Activated B cell treated with CpG ODN at 0.5 μM for 24 hours (primary cell): ENCODE measurements at regions of chr1 and their contacts with region 1.

Region 1: GRCh38 chr1:58903514-58904298 is 119.9 kb upstream of the JUN start:
- DNase-seq: peak; percentile 75
- ATAC-seq: peak; percentile 90
- H3K4me3 Mint-ChIP-seq: peak overlapping the region; percentile 84
- H3K27ac Mint-ChIP-seq: peak overlapping the region; percentile 81
- H3K4me1 Mint-ChIP-seq: peaks cover 16% of the 10 kb centered on the region
- H3K27me3 Mint-ChIP-seq: no peaks in the 10 kb centered on the region
- CTCF ChIP-seq: no peak

Region 2: DNA sequence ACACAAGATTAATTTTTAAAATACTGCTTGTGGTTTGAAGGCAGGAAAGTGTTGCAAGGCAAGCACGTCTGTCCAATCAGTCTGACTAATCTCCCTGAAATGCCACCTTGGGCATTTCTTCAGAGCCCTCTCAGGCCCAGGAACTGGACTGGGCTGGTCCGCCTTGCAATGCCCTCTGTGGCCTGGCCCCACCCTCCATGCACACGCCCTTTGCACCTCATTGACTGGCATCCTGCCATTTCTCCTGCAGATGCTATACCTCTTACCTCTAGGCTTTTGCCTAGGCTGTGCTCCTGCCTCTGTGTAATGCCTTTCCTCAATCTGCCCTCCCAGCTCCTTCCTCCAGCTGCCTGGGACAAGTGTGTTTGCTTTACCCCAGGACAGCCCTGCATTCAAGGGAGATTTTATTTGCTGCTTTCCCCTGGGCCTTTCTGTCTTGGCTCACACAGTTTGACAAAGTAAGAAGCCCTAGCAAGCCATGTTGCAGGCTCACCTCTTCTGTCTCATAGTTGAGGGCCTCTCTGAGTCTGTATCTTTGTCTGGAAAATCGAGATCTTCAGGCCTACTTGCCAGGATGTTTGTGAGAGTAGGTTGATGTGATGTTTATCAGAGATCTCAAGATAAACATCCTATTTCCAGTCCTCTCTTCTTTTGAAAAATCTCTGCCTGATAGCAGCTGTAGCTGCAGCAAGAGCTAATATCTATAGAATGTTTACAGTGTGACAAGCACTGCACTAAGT is 29.3 kb after region 1 on chr1:
- CTCF ChIA-PET with region 1: no interaction called
- POLR2A ChIA-PET with region 1: no interaction called
- intact Hi-C with region 1: no loop called
- DNase-seq: no peak
- ATAC-seq: no peak
- H3K4me3 Mint-ChIP-seq: no peak overlapping the region
- H3K27ac Mint-ChIP-seq: no peak overlapping the region
- H3K4me1 Mint-ChIP-seq: peaks cover 8% of the 10 kb centered on the region
- H3K27me3 Mint-ChIP-seq: no peaks in the 10 kb centered on the region
- CTCF ChIP-seq: no peak

Region 3: DNA sequence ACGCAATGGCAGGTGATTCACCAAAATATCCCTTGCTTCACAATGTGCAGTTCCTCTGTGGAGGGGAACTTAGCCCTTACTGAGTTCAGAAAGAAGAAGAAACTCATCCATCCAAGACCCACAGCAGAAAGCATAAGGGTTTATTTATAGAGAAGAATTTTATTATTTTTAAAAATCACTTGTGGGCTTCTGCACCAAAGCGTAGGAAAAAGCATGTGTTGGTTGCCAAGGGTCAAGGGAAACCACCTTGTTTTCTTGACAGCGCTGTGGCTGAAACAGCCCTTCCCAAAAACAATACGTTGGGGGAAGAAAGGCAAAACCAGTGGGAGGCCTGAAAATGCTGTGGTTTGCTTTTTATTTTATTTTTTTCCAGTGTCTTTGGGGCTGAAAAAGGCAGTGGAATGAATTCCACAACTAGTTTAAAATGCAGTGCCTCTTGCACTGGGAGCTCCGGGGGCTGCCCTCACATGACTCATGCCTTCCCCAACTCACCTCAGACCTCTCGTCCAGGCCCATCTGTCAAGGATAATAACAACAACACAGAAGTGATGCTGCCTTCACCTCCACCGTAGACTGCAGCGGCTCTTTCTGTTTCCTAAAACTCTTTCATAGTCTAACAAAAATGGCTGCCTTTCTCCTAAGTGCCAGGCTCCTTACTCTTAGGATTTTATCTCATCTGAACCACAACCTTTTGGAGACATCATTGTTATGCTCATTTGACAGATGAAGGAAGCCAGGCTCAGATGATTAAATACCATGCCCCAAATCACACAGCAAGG is 104.3 kb after region 1 on chr1:
- CTCF ChIA-PET with region 1: no interaction called
- POLR2A ChIA-PET with region 1: no interaction called
- intact Hi-C with region 1: loop called (anchors 5 kb)
- DNase-seq: no peak
- ATAC-seq: peak; percentile 76
- H3K4me3 Mint-ChIP-seq: peak overlapping the region; percentile 62
- H3K27ac Mint-ChIP-seq: peak overlapping the region; percentile 90
- H3K4me1 Mint-ChIP-seq: peaks cover 82% of the 10 kb centered on the region
- H3K27me3 Mint-ChIP-seq: no peaks in the 10 kb centered on the region
- CTCF ChIP-seq: no peak

Region 4: DNA sequence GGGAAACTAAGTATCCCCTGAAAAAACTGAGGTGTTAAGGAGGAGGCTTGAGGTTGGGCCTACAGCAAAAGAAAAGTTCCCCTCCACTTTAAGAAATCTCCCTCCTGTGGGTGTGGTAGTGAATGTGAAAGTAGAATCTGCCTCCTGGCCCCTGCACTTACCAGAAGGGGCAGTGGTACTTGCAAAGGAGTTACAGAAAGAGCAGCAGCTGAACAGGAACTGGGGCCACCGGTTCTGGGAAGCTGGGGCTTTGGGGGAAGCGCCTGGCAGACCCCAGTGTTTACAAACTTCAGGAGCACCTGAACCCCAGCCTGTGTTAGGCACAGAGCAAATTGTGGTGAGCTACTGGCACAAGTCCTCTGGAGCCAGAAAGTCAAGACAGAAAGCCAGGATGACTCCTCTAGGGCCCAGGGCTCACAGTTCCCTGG is 143.0 kb after region 1 on chr1:
- CTCF ChIA-PET with region 1: interaction called, 3 read pairs
- POLR2A ChIA-PET with region 1: no interaction called
- intact Hi-C with region 1: loop called (anchors 5 kb)
- DNase-seq: peak; percentile 22
- ATAC-seq: peak; percentile 96
- H3K4me3 Mint-ChIP-seq: no peak overlapping the region
- H3K27ac Mint-ChIP-seq: peak overlapping the region; percentile 91
- H3K4me1 Mint-ChIP-seq: peaks cover 31% of the 10 kb centered on the region
- H3K27me3 Mint-ChIP-seq: no peaks in the 10 kb centered on the region
- CTCF ChIP-seq: no peak

Region 5: DNA sequence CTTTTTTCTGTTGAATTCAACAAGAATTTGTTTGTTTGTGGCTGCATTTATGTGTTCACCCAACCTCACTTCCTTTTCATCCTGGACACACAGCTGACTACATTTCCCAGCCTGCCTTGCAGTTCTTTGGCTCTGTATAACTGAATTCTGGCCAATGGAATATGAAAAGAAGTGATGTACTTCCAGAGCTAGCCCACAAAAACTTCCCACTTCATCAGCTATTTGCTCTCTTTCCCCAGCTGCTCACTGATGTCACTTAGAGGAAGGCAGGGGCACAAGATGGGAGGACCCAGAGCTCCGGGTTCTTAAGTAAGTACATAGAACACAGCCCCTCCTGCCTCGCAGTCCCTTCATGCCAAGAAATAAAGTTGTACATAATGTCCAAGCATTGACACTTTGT is 158.2 kb after region 1 on chr1:
- CTCF ChIA-PET with region 1: no interaction called
- POLR2A ChIA-PET with region 1: no interaction called
- intact Hi-C with region 1: no loop called
- DNase-seq: no peak
- ATAC-seq: no peak
- H3K4me3 Mint-ChIP-seq: no peak overlapping the region
- H3K27ac Mint-ChIP-seq: no peak overlapping the region
- H3K4me1 Mint-ChIP-seq: peaks cover 35% of the 10 kb centered on the region
- H3K27me3 Mint-ChIP-seq: no peaks in the 10 kb centered on the region
- CTCF ChIP-seq: no peak

Region 6: GRCh38 chr1:59146651-59147358 is 243.1 kb after region 1 on chr1:
- CTCF ChIA-PET with region 1: no interaction called
- POLR2A ChIA-PET with region 1: no interaction called
- intact Hi-C with region 1: loop called (anchors 5 kb)
- DNase-seq: peak; percentile 64
- ATAC-seq: peak; percentile 84
- H3K4me3 Mint-ChIP-seq: peak overlapping the region; percentile 85
- H3K27ac Mint-ChIP-seq: peak overlapping the region; percentile 82
- H3K4me1 Mint-ChIP-seq: peaks cover 46% of the 10 kb centered on the region
- H3K27me3 Mint-ChIP-seq: no peaks in the 10 kb centered on the region
- CTCF ChIP-seq: no peak